Right lobe of liver (tissue), 6 donors: ENCODE measurements at regions of chr22 and their contacts with region 1.

Region 1: DNA sequence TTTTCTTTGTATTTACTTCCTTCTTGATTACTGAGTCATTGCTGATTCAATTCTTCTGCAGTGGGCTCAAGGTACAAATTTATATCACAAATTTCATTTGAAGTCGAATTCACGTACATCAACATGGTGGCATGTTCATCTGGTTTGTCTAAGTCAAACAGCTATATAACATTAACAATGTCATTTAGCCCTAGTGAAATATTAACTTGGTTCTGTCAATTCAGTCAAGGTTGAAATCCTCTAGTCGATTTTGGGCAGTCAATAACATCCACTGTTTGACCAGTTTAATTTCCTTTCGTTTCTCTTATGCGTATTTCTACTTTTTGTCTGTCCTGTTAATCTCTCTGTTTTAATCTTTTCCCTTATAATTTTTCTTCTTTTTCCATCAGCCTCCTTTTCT is 4.1 kb upstream of the ATXN10 start:
- DNase-seq: no peak
- ATAC-seq: peak in 3 of 4 donors; percentile 15 to 45 (median 45)
- H3K4me3 ChIP-seq: peak overlapping the region in 2 of 3 donors; percentile 3 to 28
- H3K27ac ChIP-seq: peak overlapping the region in 2 of 3 donors; percentile 29 to 35
- H3K4me1 ChIP-seq: peaks cover 0 to 15% (median 3%) of the 10 kb centered on the region in 4 donors
- H3K27me3 ChIP-seq: no peaks in the 10 kb centered on the region
- CTCF ChIP-seq: no peak
- POLR2A ChIP-seq: no peak

Region 2: GRCh38 chr22:45785458-45785857 is 118.0 kb after region 1 on chr22:
- intact Hi-C with region 1: loop called in 1 of 2 experiments (anchors 5 kb)
- DNase-seq: peak; percentile 67 to 73 (median 67)
- ATAC-seq: peak; percentile 86 to 90 (median 88)
- H3K4me3 ChIP-seq: no peak overlapping the region
- H3K27ac ChIP-seq: peak overlapping the region in 1 of 3 donors; percentile 49
- H3K4me1 ChIP-seq: peaks cover 0 to 38% (median 4%) of the 10 kb centered on the region in 4 donors
- H3K27me3 ChIP-seq: no peaks in the 10 kb centered on the region
- CTCF ChIP-seq: no peak
- POLR2A ChIP-seq: no peak